GM12878 (cell line): ENCODE measurements at regions of chr19 and their contacts with region 1.

Region 1: GRCh38 chr19:1074544-1075283 is 7.7 kb downstream of the ARHGAP45 start:
- DNase-seq: no peak
- ATAC-seq: peak; percentile 41
- H3K4me3 ChIP-seq: peak overlapping the region; percentile 74; the same call in 1 of the 2 replicates
- H3K27ac ChIP-seq: no peak overlapping the region; the same call in 1 of the 2 replicates
- H3K4me1 ChIP-seq: peaks cover 32% of the 10 kb centered on the region
- H3K27me3 ChIP-seq: no peaks in the 10 kb centered on the region
- CTCF ChIP-seq: no peak
- EP300 ChIP-seq: no peak
- POLR2A ChIP-seq: no peak; the same call in none of the 2 replicates
- RAD21 ChIP-seq: no peak

Region 2: DNA sequence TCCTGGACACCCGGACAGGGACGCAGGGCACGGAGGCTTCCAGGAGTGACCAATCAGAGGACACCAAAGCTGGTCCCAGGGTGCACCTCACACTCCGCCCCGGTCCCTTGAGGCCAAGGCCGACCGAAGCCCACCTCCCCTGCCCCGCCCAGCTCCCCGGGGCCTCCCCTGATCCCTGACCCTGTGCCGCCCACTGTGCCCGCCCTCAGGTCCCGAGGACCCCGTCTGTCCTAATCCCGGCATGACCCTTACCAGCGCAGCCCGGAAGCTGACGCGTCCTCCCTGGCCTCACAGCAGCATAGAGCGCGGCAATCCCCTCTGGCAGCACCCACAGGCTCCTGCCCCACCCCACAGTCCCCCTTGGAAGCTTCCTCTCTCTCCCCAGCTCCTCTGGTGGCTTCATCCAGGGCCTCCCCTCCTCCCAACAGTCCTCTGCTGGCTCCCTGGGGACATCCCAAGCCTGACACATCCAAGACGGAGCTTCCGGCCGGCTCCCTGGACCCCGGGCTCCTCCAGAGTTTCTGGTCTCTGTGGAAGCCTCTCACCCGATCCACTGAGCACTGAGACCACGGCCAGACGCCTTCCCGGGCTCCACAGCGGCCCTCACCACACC is 550.5 kb before region 1 on chr19:
- CTCF ChIA-PET with region 1: no interaction called
- POLR2A ChIA-PET with region 1: no interaction called
- RAD21 ChIA-PET with region 1: no interaction called
- SMC1A ChIA-PET with region 1: no interaction called
- in situ Hi-C with region 1: no loop called
- intact Hi-C with region 1: no loop called
- DNase-seq: no peak
- ATAC-seq: no peak
- H3K4me3 ChIP-seq: no peak overlapping the region
- H3K27ac ChIP-seq: no peak overlapping the region
- H3K4me1 ChIP-seq: no peaks in the 10 kb centered on the region
- H3K27me3 ChIP-seq: no peaks in the 10 kb centered on the region
- CTCF ChIP-seq: no peak
- EP300 ChIP-seq: no peak
- POLR2A ChIP-seq: no peak
- RAD21 ChIP-seq: no peak

Region 3: GRCh38 chr19:1026189-1027019 is 48.3 kb before region 1 on chr19 and contains the start of gene CNN2:
- CTCF ChIA-PET with region 1: no interaction called
- POLR2A ChIA-PET with region 1: interaction called, 10 read pairs
- RAD21 ChIA-PET with region 1: interaction called, 5 read pairs
- SMC1A ChIA-PET with region 1: no interaction called
- in situ Hi-C with region 1: no loop called
- intact Hi-C with region 1: loop called (anchors 1 kb)
- DNase-seq: no peak
- ATAC-seq: peak; percentile 84
- H3K4me3 ChIP-seq: peak within 1 kb of the TSS; percentile 90
- H3K27ac ChIP-seq: peak within 1 kb of the TSS; percentile 92
- H3K4me1 ChIP-seq: peaks cover 6% of the 10 kb centered on the region
- H3K27me3 ChIP-seq: no peaks in the 10 kb centered on the region
- CTCF ChIP-seq: no peak
- EP300 ChIP-seq: no peak
- POLR2A ChIP-seq: peak; percentile 89
- RAD21 ChIP-seq: no peak
- polyA plus RNA-seq, gene CNN2: 34.7 to 42.5 TPM

Region 4: GRCh38 chr19:1087813-1088415 is 13.2 kb after region 1 on chr19:
- CTCF ChIA-PET with region 1: interaction called, 3 read pairs
- POLR2A ChIA-PET with region 1: interaction called, 23 read pairs
- RAD21 ChIA-PET with region 1: interaction called, 6 read pairs
- SMC1A ChIA-PET with region 1: interaction called, 14 read pairs
- in situ Hi-C with region 1: no loop called
- intact Hi-C with region 1: no loop called
- DNase-seq: no peak
- ATAC-seq: peak; percentile 66
- H3K4me3 ChIP-seq: no peak overlapping the region
- H3K27ac ChIP-seq: peak overlapping the region; percentile 83
- H3K4me1 ChIP-seq: peaks cover 29% of the 10 kb centered on the region
- H3K27me3 ChIP-seq: no peaks in the 10 kb centered on the region
- CTCF ChIP-seq: peak in 2 of 3 experiments; percentile 9 to 26; a peak in 2 of 6 replicates
- EP300 ChIP-seq: no peak
- POLR2A ChIP-seq: peak; percentile 71
- RAD21 ChIP-seq: no peak

Region 5: DNA sequence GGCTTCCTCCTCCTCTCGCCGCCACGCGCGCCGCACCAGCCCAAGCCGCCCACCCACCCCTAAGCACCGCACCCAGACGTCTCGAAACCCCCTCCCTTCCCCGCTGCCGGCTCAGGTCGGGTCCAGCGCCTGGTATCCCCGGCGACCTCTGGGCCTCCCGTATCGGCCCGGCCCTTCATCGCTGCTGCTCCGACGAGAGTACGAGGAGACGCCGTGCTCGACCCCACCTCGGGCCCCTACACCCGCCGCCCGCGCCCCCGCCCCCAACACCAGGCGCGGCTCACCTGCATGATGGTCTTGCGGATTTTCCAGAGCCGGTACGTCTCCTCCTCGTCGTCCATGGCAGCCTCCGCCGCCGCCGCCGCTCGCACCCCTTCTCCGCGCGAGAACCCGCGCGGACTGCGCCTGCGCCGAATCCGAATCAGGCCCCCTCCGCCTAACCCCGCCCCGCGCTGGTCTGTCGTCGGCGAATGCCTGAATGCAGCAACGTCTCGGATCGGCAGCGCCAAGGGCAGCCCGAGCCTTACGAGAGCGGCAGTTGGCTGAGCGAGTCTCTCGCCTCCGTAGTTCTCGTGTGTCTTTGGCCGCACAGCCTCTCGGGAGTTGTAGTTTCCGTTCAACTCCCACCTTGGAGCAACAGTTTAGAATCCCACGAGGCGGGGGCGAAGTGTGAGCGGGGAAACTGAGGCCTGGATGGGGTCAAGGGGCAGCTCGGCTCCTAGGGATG is 20.4 kb after region 1 on chr19 and contains the start of gene POLR2E:
- CTCF ChIA-PET with region 1: interaction called, 3 read pairs
- POLR2A ChIA-PET with region 1: interaction called, 12 read pairs
- RAD21 ChIA-PET with region 1: interaction called, 5 read pairs
- SMC1A ChIA-PET with region 1: interaction called, 4 read pairs
- in situ Hi-C with region 1: no loop called
- intact Hi-C with region 1: no loop called
- DNase-seq: peak; percentile 86
- ATAC-seq: peak; percentile 93
- H3K4me3 ChIP-seq: peak within 1 kb of the TSS; percentile 96
- H3K27ac ChIP-seq: peak within 1 kb of the TSS; percentile 74
- H3K4me1 ChIP-seq: peaks cover 19% of the 10 kb centered on the region
- H3K27me3 ChIP-seq: no peaks in the 10 kb centered on the region
- CTCF ChIP-seq: no peak
- EP300 ChIP-seq: no peak
- POLR2A ChIP-seq: peak; percentile 90
- RAD21 ChIP-seq: no peak
- polyA plus RNA-seq, gene POLR2E: 4.0 to 17.0 TPM

Region 6: GRCh38 chr19:1119475-1120217 is 44.9 kb after region 1 on chr19:
- CTCF ChIA-PET with region 1: no interaction called
- POLR2A ChIA-PET with region 1: no interaction called
- RAD21 ChIA-PET with region 1: no interaction called
- SMC1A ChIA-PET with region 1: no interaction called
- in situ Hi-C with region 1: no loop called
- intact Hi-C with region 1: no loop called
- DNase-seq: no peak
- ATAC-seq: no peak
- H3K4me3 ChIP-seq: no peak overlapping the region
- H3K27ac ChIP-seq: no peak overlapping the region
- H3K4me1 ChIP-seq: no peaks in the 10 kb centered on the region
- H3K27me3 ChIP-seq: no peaks in the 10 kb centered on the region
- CTCF ChIP-seq: no peak
- EP300 ChIP-seq: no peak
- POLR2A ChIP-seq: no peak; the same call in 1 of the 2 replicates
- RAD21 ChIP-seq: no peak